Gastrocnemius medialis (tissue), 4 donors: ENCODE measurements at regions of chr7 and their contacts with region 1.

Region 1: GRCh38 chr7:99408379-99409191 is at the starts of genes BUD31 and PDAP1:
- DNase-seq: peak; percentile 88 to 93
- ATAC-seq: peak; percentile 92 to 93
- H3K4me3 ChIP-seq: peak within 1 kb of the TSS; percentile 96 to 100 (median 99)
- H3K27ac ChIP-seq: peak within 1 kb of the TSS; percentile 93 to 99 (median 96)
- H3K4me1 ChIP-seq: peaks cover 40 to 43% of the 10 kb centered on the region in 2 donors
- H3K27me3 ChIP-seq: no peaks in the 10 kb centered on the region
- CTCF ChIP-seq: peak in 4 of 5 experiments; percentile 3 to 34 (median 22)
- POLR2A ChIP-seq: peak; percentile 84 to 95
- total RNA-seq, gene BUD31: 23.3 to 46.8 (median 28.0) TPM
- total RNA-seq, gene PDAP1: 81.7 to 258 (median 198) TPM

Region 2: GRCh38 chr7:99267481-99267840 is 141.1 kb before region 1 on chr7:
- in situ Hi-C with region 1: no loop called
- intact Hi-C with region 1: no loop called
- DNase-seq: no peak
- ATAC-seq: no peak
- H3K4me3 ChIP-seq: no peak overlapping the region
- H3K27ac ChIP-seq: no peak overlapping the region
- H3K4me1 ChIP-seq: no peaks in the 10 kb centered on the region
- H3K27me3 ChIP-seq: no peaks in the 10 kb centered on the region
- CTCF ChIP-seq: no peak
- POLR2A ChIP-seq: no peak

Region 3: GRCh38 chr7:99325545-99326407 is 82.8 kb before region 1 on chr7 and contains the start of gene ARPC1A:
- in situ Hi-C with region 1: no loop called
- intact Hi-C with region 1: loop called (anchors 5 kb)
- DNase-seq: peak; percentile 82 to 88
- ATAC-seq: peak; percentile 93 to 97
- H3K4me3 ChIP-seq: peak within 1 kb of the TSS; percentile 97 to 99 (median 98)
- H3K27ac ChIP-seq: peak within 1 kb of the TSS; percentile 88 to 95 (median 94)
- H3K4me1 ChIP-seq: peaks cover 53 to 54% of the 10 kb centered on the region in 2 donors
- H3K27me3 ChIP-seq: no peaks in the 10 kb centered on the region
- CTCF ChIP-seq: peak; percentile 28 to 39 (median 30)
- POLR2A ChIP-seq: peak; percentile 60 to 76
- total RNA-seq, gene ARPC1A: 37.0 to 58.8 (median 44.1) TPM

Region 4: GRCh38 chr7:99364961-99365817 is 43.4 kb before region 1 on chr7:
- in situ Hi-C with region 1: loop called in 1 of 4 experiments (anchors 10 kb)
- intact Hi-C with region 1: no loop called
- DNase-seq: peak in 1 of 2 donors; percentile 59
- ATAC-seq: peak in 1 of 2 donors; percentile 69
- H3K4me3 ChIP-seq: no peak overlapping the region
- H3K27ac ChIP-seq: no peak overlapping the region
- H3K4me1 ChIP-seq: no peaks in the 10 kb centered on the region
- H3K27me3 ChIP-seq: no peaks in the 10 kb centered on the region
- CTCF ChIP-seq: peak; percentile 10 to 49 (median 39)
- POLR2A ChIP-seq: no peak

Region 5: DNA sequence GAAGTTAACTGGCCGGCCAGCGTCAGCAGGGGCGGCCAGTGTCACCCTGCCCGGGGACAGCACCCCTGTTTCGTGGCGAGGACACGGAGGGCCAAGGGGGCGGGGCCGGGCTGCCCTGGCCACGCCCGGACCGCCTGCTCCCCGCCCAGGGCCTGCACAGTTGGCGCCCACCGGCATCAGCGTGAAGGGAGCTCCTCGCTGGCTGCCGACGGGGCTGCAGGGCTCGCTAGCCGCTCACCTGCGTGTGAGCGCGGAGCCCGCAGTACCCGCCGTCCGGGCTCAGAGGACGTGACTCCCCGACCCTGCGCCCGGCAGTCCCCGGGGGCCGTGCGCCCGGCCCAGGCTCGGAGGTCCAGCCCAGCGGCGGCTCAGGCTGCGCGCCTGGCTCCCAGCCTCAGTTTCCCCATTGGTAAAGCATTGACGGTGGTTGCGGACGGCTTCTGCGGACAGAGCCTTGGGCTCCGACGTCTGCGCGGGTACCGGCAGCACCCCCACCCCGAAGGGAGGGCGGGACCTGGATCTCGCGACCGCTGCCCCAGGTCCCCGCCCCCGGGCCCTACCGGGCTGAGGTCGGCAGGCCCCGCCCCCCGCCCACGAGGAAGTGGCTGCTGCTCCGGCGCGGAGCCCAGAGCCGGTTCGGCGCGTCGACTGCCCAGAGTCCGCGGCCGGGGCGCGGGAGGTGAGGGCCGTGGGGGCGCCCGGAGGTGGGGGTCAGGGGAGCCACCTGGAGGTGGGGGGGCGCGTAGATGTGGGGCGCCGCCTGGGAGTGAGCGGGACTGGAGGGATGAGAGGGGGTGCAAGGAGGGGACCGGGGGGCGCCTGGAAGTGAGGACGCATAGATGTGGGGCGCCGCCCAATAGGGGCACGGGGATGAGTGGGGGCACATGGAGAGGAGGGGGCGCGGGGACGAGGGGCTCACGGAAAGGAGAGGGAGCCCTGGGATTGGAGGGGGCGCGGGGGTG is 34.2 kb before region 1 on chr7 and contains the start of gene ARPC1B:
- in situ Hi-C with region 1: loop called in 1 of 4 experiments (anchors 10 kb)
- intact Hi-C with region 1: loop called (anchors 1 kb)
- DNase-seq: peak; percentile 36 to 58
- ATAC-seq: peak; percentile 43 to 49
- H3K4me3 ChIP-seq: peak within 1 kb of the TSS; percentile 68 to 93 (median 74)
- H3K27ac ChIP-seq: peak within 1 kb of the TSS; percentile 61 to 83 (median 78)
- H3K4me1 ChIP-seq: peaks cover 5 to 13% of the 10 kb centered on the region in 2 donors
- H3K27me3 ChIP-seq: no peaks in the 10 kb centered on the region
- CTCF ChIP-seq: no peak
- POLR2A ChIP-seq: peak; percentile 31 to 33
- total RNA-seq, gene ARPC1B: 24.7 to 38.7 (median 30.8) TPM

Region 6: GRCh38 chr7:99392677-99393354 is 15.8 kb before region 1 on chr7:
- in situ Hi-C with region 1: no loop called
- intact Hi-C with region 1: loop called (anchors 1 kb)
- DNase-seq: peak; percentile 54 to 78
- ATAC-seq: peak; percentile 88
- H3K4me3 ChIP-seq: peak overlapping the region; percentile 62 to 89 (median 70)
- H3K27ac ChIP-seq: peak overlapping the region; percentile 44 to 67 (median 62)
- H3K4me1 ChIP-seq: peaks cover 6 to 18% of the 10 kb centered on the region in 2 donors
- H3K27me3 ChIP-seq: no peaks in the 10 kb centered on the region
- CTCF ChIP-seq: peak in 1 of 5 experiments; percentile 15
- POLR2A ChIP-seq: peak; percentile 28 to 47

Region 7: DNA sequence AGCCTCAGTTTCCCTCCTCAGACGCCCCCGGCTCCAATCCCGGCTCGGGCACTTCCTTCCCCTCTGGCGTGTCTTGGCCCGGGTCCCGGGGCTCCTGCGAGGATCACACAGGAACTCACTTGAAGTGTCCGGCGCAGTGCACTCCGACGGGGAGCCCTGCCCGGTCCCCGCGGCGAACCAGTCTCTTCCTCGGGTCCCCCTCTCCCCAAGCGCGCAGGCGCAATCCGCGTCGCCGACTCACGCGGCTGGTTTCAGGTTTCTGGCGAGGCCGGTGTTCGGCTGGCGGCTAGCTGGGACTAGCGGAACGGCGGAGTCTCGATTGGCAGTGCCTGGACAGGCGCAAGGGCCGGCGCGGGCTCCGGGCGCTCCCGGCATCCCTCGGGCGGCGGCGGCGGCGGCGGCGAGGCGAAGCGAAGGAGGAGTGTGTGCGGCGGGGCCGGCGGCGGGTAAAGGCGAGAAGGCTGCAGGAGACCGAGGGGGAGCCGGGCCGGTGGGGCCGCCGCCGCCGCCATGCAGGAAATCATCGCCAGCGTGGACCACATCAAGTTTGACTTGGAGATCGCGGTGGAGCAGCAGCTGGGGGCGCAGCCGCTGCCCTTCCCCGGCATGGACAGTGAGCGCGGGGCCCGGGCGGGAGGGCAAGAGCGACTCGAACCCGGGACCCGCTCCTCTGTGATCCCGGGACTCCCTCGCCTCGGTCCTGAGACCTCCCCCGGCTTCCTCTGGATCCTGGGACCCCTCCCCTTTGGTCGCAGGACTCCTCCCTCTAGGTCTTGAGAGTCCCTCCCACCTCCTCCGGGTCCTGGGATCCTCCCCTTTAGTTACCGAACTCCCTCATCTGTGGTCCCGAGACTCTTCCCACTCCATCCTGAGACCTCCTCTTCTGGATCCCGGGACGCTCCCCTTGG is 30.2 kb after region 1 on chr7 and contains the starts of genes CPSF4 and PTCD1:
- in situ Hi-C with region 1: no loop called
- intact Hi-C with region 1: loop called (anchors 1 kb)
- DNase-seq: peak; percentile 95 to 96
- ATAC-seq: peak; percentile 94 to 97
- H3K4me3 ChIP-seq: peak within 1 kb of the TSS; percentile 83 to 99 (median 96)
- H3K27ac ChIP-seq: peak within 1 kb of the TSS; percentile 92 to 98 (median 96)
- H3K4me1 ChIP-seq: peaks cover 28 to 37% of the 10 kb centered on the region in 2 donors
- H3K27me3 ChIP-seq: no peaks in the 10 kb centered on the region
- CTCF ChIP-seq: no peak
- POLR2A ChIP-seq: peak; percentile 78 to 85
- total RNA-seq, gene CPSF4: 21.4 to 40.4 (median 26.1) TPM
- total RNA-seq, gene PTCD1: 7.8 to 14.1 (median 10.9) TPM

Region 8: GRCh38 chr7:99451936-99452335 is 43.4 kb after region 1 on chr7:
- in situ Hi-C with region 1: no loop called
- intact Hi-C with region 1: no loop called
- DNase-seq: no peak
- ATAC-seq: no peak
- H3K4me3 ChIP-seq: no peak overlapping the region
- H3K27ac ChIP-seq: no peak overlapping the region
- H3K4me1 ChIP-seq: no peaks in the 10 kb centered on the region
- H3K27me3 ChIP-seq: no peaks in the 10 kb centered on the region
- CTCF ChIP-seq: no peak
- POLR2A ChIP-seq: no peak